Gastrocnemius medialis (tissue), 4 donors: ENCODE measurements at regions of chr1 and their contacts with region 1.

Region 1: DNA sequence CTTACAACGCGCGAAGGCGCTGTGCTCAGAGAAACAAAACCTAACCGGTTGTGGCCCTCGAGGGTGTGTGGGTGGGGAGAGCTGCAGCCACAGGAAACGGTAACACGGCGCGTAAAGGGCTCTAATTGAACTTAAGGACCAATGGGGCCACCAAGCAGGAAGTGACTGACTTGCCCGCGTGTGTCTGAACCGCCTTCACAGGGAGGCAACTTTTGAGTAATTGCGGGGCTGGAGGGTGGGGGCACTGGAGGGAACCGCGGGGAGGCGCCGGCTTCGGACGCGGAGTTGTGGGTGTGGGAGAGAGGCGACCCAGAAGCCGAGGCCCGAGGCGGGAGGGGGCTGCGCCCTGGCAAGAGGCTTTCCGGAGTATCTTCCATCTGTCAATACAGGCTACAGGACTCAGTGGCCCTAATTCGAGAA is 577 bp upstream of the PNRC2 start:
- DNase-seq: peak; percentile 86 to 87
- ATAC-seq: peak; percentile 79 to 81
- H3K4me3 ChIP-seq: peak overlapping the region; percentile 79 to 96 (median 85)
- H3K27ac ChIP-seq: peak overlapping the region; percentile 94 to 100 (median 98)
- H3K4me1 ChIP-seq: peaks cover 24 to 40% of the 10 kb centered on the region in 2 donors
- H3K27me3 ChIP-seq: no peaks in the 10 kb centered on the region
- CTCF ChIP-seq: peak in 3 of 5 experiments; percentile 39 to 57 (median 41)
- POLR2A ChIP-seq: no peak

Region 2: DNA sequence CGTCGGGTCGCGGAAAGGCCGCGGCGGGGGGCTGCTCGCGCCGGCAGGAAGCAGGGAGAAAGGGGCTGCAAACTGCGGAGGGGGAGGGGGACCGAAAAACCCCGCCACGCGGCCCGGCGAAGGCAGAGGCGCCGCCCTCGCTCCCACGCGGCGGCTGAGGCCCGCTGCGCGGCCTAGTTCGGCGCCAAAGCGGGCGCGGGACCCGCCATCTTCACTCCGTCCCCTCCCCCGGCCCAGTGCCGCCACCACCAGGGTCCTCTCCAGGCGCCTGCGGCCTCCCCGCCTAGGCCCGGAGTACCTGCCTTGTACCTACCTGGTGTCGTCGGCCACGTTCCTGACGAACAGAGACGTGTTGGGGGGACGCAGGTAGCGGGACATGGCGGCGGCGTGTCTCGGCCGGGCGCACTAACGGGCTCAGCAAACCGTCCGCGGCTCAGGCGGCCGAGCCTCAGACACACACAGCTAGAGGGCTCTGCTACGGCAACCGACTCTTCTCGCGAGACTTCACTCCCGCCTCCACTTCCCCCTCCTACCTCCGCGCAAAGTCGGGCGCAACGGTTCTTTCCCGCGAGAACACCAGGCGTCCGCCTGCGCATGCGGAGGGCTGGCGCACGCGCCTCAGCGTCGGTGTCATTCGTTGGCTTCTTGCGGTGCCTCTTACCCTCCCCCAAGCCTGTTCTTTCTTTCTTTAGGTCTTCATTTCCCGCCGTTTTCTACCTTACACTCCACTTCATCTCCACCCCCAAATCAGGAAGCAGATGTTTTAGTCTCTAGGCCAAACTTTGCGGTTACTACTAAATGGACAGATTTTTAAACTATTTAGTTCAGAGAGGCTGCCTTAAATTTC is 21.1 kb after region 1 on chr1 and contains the start of gene SRSF10:
- in situ Hi-C with region 1: no loop called
- intact Hi-C with region 1: loop called (anchors 1 kb)
- DNase-seq: peak; percentile 98 to 99
- ATAC-seq: peak; percentile 99
- H3K4me3 ChIP-seq: peak within 1 kb of the TSS; percentile 72 to 89 (median 88)
- H3K27ac ChIP-seq: peak within 1 kb of the TSS; percentile 88 to 98 (median 96)
- H3K4me1 ChIP-seq: peaks cover 51 to 52% of the 10 kb centered on the region in 2 donors
- H3K27me3 ChIP-seq: no peaks in the 10 kb centered on the region
- CTCF ChIP-seq: peak in 3 of 5 experiments; percentile 39 to 64 (median 51)
- POLR2A ChIP-seq: peak; percentile 99
- total RNA-seq, gene SRSF10: 20.4 to 49.9 (median 26.5) TPM

Region 3: GRCh38 chr1:24018611-24019580 is 59.8 kb after region 1 on chr1:
- in situ Hi-C with region 1: no loop called
- intact Hi-C with region 1: loop called (anchors 2 kb)
- DNase-seq: peak; percentile 82 to 94
- ATAC-seq: peak; percentile 81 to 90
- H3K4me3 ChIP-seq: peak overlapping the region in 3 of 4 donors; percentile 14 to 40 (median 21)
- H3K27ac ChIP-seq: peak overlapping the region; percentile 84 to 89 (median 89)
- H3K4me1 ChIP-seq: peaks cover 56 to 58% of the 10 kb centered on the region in 2 donors
- H3K27me3 ChIP-seq: no peaks in the 10 kb centered on the region
- CTCF ChIP-seq: no peak
- POLR2A ChIP-seq: peak in 1 of 2 donors; percentile 27

Region 4: DNA sequence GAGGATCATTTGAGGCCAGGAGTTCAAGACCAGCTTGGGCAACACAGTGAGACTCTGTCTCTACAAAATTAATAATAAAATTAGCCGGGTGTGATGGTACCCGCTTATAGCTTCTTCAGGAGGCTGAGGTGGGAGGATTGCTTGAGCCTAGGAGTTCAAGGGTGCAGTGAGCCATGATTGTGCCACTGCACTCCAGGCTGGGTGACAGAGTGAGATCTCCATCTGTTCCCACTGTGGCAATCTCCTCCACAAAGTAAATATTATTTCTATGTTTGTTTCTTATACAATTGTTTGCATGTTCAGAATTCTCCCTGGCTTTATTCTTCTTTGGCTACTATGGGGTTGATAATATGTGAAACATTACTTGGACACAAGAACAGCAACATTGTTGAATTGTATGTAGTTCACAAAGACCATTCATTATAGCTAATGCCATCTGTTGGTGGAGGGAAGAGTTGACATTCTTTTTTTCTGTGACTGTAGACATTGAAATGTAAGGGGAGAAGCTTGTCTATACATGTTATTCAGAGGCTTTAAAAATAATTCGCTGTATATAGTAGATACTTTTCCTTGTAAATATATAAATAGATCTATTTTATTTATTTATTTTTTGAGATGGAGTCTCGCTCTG is 68.9 kb after region 1 on chr1:
- in situ Hi-C with region 1: loop called in 1 of 4 experiments (anchors 5 kb)
- intact Hi-C with region 1: loop called (anchors 1 kb)
- DNase-seq: no peak
- ATAC-seq: peak; percentile 72 to 91
- H3K4me3 ChIP-seq: no peak overlapping the region
- H3K27ac ChIP-seq: no peak overlapping the region
- H3K4me1 ChIP-seq: peaks cover 0 to 4% of the 10 kb centered on the region in 2 donors
- H3K27me3 ChIP-seq: no peaks in the 10 kb centered on the region
- CTCF ChIP-seq: peak; percentile 33 to 76 (median 58)
- POLR2A ChIP-seq: no peak

Region 5: GRCh38 chr1:24111996-24112779 is 153.1 kb after region 1 on chr1 and contains the start of gene MYOM3:
- in situ Hi-C with region 1: no loop called
- intact Hi-C with region 1: loop called (anchors 5 kb)
- DNase-seq: peak; percentile 86 to 92
- ATAC-seq: peak; percentile 65 to 68
- H3K4me3 ChIP-seq: peak within 1 kb of the TSS; percentile 58 to 69 (median 64)
- H3K27ac ChIP-seq: peak within 1 kb of the TSS; percentile 93 to 97 (median 96)
- H3K4me1 ChIP-seq: peaks cover 26 to 51% of the 10 kb centered on the region in 2 donors
- H3K27me3 ChIP-seq: no peaks in the 10 kb centered on the region
- CTCF ChIP-seq: peak; percentile 59 to 82 (median 79)
- POLR2A ChIP-seq: peak; percentile 45 to 80
- total RNA-seq, gene MYOM3: 114 to 266 (median 184) TPM

Region 6: GRCh38 chr1:24391882-24392603 is 433.0 kb after region 1 on chr1:
- in situ Hi-C with region 1: no loop called
- intact Hi-C with region 1: loop called (anchors 10 kb)
- DNase-seq: peak; percentile 28 to 54
- ATAC-seq: peak; percentile 80 to 87
- H3K4me3 ChIP-seq: peak overlapping the region; percentile 32 to 37 (median 34)
- H3K27ac ChIP-seq: peak overlapping the region; percentile 77 to 85 (median 82)
- H3K4me1 ChIP-seq: peaks cover 6 to 19% of the 10 kb centered on the region in 2 donors
- H3K27me3 ChIP-seq: no peaks in the 10 kb centered on the region
- CTCF ChIP-seq: peak; percentile 68 to 83 (median 76)
- POLR2A ChIP-seq: no peak

Region 7: GRCh38 chr1:24642481-24643361 is 683.7 kb after region 1 on chr1 and contains the start of gene SRRM1:
- in situ Hi-C with region 1: no loop called
- intact Hi-C with region 1: loop called (anchors 5 kb)
- DNase-seq: peak; percentile 100
- ATAC-seq: peak; percentile 95 to 96
- H3K4me3 ChIP-seq: peak within 1 kb of the TSS; percentile 84 to 97 (median 92)
- H3K27ac ChIP-seq: peak within 1 kb of the TSS; percentile 93 to 99 (median 97)
- H3K4me1 ChIP-seq: peaks cover 23 to 30% of the 10 kb centered on the region in 2 donors
- H3K27me3 ChIP-seq: no peaks in the 10 kb centered on the region
- CTCF ChIP-seq: peak in 2 of 5 experiments; percentile 6 to 8
- POLR2A ChIP-seq: peak; percentile 99 to 100
- total RNA-seq, gene SRRM1: 28.5 to 59.8 (median 40.2) TPM